Naive thymus-derived CD4-positive, alpha-beta T cell (primary cell): ENCODE measurements at regions of chr16 and their contacts with region 1.

Region 1: DNA sequence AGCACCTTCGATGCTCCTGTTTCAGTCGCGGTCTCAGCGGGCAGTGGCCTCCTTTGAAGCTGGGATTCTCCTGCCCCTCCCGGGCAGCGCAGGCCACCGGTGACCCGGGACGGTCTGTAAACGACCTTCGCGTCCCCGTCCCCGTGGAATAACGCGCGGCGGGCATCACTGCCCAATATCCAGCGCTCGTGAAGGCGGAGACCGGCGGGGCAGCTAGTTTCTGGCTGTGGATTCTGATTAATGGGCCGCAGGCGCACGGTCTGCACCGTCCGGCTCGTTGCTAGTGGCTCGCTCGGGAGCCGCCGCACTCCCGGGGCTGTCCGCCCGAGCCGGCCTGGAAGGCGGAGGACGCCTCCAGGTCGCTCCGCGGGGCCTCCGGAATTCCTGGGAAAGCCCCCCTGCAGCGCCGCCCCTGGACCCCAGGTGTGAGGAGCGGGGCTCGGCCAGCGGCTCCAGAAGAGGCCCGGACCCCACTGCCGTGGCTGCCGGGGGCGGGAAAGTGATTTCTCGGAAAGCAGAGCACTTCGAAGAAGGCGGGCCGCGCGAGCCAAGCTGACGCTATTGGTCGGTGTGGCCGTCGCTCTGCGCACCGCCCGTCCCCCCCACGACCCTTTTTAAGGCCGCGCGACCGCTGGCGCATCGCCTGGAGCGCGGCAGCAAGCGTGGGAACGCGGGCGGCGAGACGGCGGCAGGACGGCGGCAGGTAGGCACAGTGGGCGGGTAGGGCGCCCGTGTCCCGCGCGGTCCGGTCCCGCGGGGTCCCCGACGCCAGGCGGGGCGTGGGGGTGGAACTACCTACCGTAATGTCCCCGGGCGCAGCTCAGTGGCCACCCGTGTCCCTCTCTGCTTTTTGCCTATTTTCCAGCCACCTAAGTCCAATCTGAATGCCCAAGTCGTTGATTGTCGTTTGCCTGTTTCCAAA is at the start of gene IRF8:
- DNase-seq: peak; percentile 55 to 86 (median 65)
- ATAC-seq: peak; percentile 79
- H3K4me3 ChIP-seq: peak within 1 kb of the TSS; percentile 51
- H3K4me3 Mint-ChIP-seq: peak within 1 kb of the TSS; percentile 79 to 92 (median 88)
- H3K27ac ChIP-seq: peak within 1 kb of the TSS; percentile 60
- H3K27ac Mint-ChIP-seq: peak within 1 kb of the TSS; percentile 13 to 83 (median 64)
- H3K4me1 ChIP-seq: peaks cover 18 to 23% of the 10 kb centered on the region in 2 donors
- H3K4me1 Mint-ChIP-seq: peaks cover 37 to 55% (median 51%) of the 10 kb centered on the region in 7 donors
- H3K27me3 ChIP-seq: no peaks in the 10 kb centered on the region
- H3K27me3 Mint-ChIP-seq: peaks cover 0 to 9% (median 0%) of the 10 kb centered on the region in 5 donors
- total RNA-seq, gene IRF8: 3.5 to 105 (median 19.9) TPM

Region 2: GRCh38 chr16:85888405-85889331 is 10.1 kb before region 1 on chr16:
- CTCF ChIA-PET with region 1: no interaction called
- POLR2A ChIA-PET with region 1: no interaction called
- intact Hi-C with region 1: loop called in 1 of 2 experiments (anchors 2 kb)
- DNase-seq: peak in 1 of 9 donors; percentile 31
- ATAC-seq: peak; percentile 90
- H3K4me3 ChIP-seq: no peak overlapping the region
- H3K4me3 Mint-ChIP-seq: peak overlapping the region in 1 of 10 donors; percentile 29
- H3K27ac ChIP-seq: no peak overlapping the region
- H3K27ac Mint-ChIP-seq: peak overlapping the region in 2 of 9 donors; percentile 26 to 44
- H3K4me1 ChIP-seq: peaks cover 0 to 8% of the 10 kb centered on the region in 2 donors
- H3K4me1 Mint-ChIP-seq: peaks cover 0 to 16% (median 10%) of the 10 kb centered on the region in 7 donors
- H3K27me3 ChIP-seq: no peaks in the 10 kb centered on the region
- H3K27me3 Mint-ChIP-seq: peaks cover 0 to 33% (median 5%) of the 10 kb centered on the region in 5 donors

Region 3: DNA sequence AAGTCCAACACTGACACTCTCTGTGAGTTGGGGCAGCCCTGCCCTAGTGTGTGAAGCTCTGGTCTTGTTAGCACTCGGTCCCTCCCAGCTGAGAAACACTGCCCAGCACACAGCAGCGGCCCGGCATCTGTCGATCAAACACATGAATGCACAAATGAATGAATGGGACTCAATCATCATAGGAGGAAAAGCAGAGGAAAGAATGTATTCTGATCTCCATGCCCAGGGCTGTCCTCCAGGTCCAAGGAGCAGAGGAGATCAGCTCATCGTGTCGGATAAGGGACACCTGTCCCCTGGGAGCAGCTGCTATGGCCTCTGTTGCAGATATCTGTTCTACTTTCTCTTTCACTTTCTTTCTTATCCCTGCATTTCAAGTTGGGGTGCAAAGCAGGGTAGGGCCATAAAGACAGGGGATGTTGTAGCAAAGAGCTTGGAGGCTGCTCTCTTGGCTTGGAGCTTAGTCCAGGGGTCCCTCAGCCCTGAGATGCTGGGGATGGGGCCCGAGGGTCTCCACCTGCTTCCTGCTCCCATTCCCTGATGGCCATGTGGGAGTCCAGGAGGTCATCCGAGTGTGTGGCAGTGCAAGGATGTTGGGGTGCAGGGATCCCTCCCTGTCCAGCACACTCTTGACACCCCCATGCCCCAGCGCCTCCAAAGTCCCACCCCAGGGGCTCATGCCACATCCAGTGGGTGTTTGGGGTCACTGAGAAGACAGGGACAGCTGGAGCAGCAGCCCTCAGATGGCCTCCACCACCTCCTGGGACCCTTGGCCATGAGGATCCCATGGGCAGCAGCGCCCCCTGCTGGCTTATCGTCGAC is 88.4 kb after region 1 on chr16:
- CTCF ChIA-PET with region 1: interaction called, 3 read pairs
- POLR2A ChIA-PET with region 1: interaction called, 3 read pairs
- intact Hi-C with region 1: loop called (anchors 5 kb)
- DNase-seq: peak in 7 of 9 donors; percentile 11 to 44 (median 26)
- ATAC-seq: no peak
- H3K4me3 ChIP-seq: no peak overlapping the region
- H3K4me3 Mint-ChIP-seq: peak overlapping the region in 1 of 10 donors; percentile 56
- H3K27ac ChIP-seq: no peak overlapping the region
- H3K27ac Mint-ChIP-seq: peak overlapping the region in 1 of 9 donors; percentile 81
- H3K4me1 ChIP-seq: peaks cover 3 to 4% of the 10 kb centered on the region in 2 donors
- H3K4me1 Mint-ChIP-seq: peaks cover 0 to 53% (median 6%) of the 10 kb centered on the region in 7 donors
- H3K27me3 ChIP-seq: no peaks in the 10 kb centered on the region
- H3K27me3 Mint-ChIP-seq: peaks cover 0 to 16% (median 5%) of the 10 kb centered on the region in 5 donors